B cell (primary cell): ENCODE measurements at regions of chr16 and their contacts with region 1.

Region 1: DNA sequence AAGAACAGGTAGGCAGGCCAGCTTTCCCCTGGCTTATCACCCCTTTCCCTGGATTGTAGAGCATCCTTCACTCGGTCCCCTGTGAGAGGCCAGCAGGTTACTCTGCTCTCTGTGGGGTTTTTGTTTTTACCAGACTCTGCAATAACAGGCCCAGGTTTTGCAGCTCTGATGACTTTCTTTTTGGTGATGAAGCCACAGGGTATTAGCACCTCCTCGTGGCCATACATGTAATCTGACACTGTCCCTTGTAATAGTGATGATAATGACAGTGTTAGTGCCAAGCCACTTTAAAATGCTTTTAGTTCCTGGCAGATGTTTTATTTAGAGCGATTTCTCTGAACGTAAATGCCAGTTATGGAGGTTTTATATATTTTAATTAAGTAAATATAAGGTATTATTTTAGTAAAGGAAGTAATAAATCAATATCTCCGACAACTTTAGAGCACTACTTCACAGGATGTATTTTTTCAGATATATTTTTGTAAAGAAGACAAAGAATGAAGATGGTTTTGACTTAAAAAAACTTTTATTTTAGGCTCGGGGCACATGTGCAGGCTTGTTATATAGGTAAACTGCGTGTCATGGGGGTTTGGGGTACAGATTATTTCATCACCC is 38.0 kb upstream of the CPHXL start:
- DNase-seq: peak; percentile 80
- ATAC-seq: peak; percentile 55
- H3K4me3 ChIP-seq: no peak overlapping the region
- H3K4me3 Mint-ChIP-seq: no peak overlapping the region
- H3K27ac ChIP-seq: no peak overlapping the region
- H3K27ac Mint-ChIP-seq: peak overlapping the region; percentile 75
- H3K4me1 ChIP-seq: peaks cover 14 to 23% of the 10 kb centered on the region in 2 donors
- H3K4me1 Mint-ChIP-seq: peaks cover 23% of the 10 kb centered on the region
- H3K27me3 ChIP-seq: no peaks in the 10 kb centered on the region
- H3K27me3 Mint-ChIP-seq: peaks cover 6% of the 10 kb centered on the region
- CTCF ChIP-seq: peak; percentile 86

Region 2: DNA sequence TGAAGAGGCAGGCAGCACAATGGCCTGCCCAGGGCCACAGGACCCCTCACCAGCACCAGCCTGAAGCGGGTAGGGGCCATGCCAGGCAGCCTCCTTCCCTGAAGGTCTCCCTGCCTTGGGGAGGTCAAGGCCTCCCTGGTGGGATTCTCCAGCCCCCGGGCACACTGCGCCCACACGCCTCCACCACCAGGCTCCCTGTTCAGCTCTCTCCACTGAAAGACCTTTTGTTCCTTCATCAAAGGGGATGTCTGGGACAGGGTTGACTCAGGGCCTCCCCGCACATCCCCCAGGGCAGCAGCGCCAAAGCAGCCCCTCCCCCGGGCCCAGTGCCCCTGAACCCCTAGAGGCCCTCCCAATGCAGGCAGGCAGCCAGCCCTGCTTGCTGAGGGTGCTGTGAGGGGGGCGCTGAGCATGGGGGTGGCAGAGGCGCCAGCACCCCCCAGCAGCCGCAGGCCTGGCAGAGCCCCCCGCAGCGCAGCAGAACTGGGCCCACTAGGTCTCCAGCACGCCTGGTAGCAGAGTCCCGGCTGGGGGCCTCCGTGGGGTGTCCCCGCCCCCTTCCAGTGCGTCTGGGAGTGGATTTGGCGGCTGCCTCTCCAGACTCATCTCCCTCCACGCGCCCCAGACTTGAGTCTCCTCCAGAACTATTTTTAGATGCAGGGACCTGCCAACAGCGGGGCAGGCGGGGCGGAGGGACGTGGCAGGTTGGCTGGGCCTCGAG is 526.0 kb before region 1 on chr16:
- CTCF ChIA-PET with region 1: interaction called, 19 read pairs
- POLR2A ChIA-PET with region 1: no interaction called
- intact Hi-C with region 1: no loop called
- DNase-seq: no peak
- ATAC-seq: no peak
- H3K4me3 ChIP-seq: no peak overlapping the region
- H3K4me3 Mint-ChIP-seq: no peak overlapping the region
- H3K27ac ChIP-seq: no peak overlapping the region
- H3K27ac Mint-ChIP-seq: no peak overlapping the region
- H3K4me1 ChIP-seq: peaks cover 0 to 7% of the 10 kb centered on the region in 2 donors
- H3K4me1 Mint-ChIP-seq: peaks cover 2% of the 10 kb centered on the region
- H3K27me3 ChIP-seq: peaks cover 0 to 89% (median 16%) of the 10 kb centered on the region in 4 experiments
- H3K27me3 Mint-ChIP-seq: peaks cover 59% of the 10 kb centered on the region
- CTCF ChIP-seq: no peak

Region 3: DNA sequence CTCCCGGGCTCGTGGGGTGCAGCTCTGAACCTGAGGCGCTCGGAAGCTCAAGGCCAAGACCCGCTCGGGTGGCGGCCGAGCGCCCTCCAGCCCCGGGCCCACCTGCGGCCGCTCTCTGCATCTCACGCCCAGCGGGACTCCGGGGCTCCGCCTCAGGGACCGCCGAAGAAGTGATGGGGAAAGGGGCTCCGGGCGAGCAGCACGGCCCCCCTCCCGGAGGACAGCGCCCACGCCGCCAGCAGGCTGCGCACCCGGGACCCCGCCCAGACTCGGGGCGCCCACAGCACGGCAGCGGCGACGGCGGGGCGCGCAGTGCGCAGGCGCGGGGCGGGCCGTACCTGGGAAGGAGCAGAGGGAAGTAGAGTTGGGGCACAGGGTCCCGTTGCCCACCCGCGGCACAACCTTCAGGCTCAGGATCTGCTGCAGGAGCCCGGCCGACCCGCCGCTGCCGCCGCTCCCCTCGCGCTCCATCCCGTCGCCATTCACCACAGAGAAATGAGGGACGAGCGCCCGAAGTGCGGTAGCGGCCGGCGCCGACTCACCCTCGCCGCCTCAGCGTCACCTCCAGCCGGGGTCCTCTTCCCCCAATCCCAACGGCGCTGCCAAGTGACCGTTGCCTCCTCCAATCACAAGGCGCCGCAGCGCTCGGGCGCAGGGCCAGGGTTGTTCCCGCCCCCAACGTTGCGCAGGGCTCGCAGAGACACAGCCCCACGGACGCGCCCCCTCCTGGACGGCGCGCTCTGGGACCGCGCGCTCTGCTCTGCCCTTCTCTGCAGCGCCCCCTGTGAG is 299.9 kb before region 1 on chr16 and contains the start of gene TMEM170A:
- CTCF ChIA-PET with region 1: interaction called, 75 read pairs
- POLR2A ChIA-PET with region 1: no interaction called
- intact Hi-C with region 1: loop called (anchors 1 kb)
- DNase-seq: peak; percentile 99
- ATAC-seq: peak; percentile 92
- H3K4me3 ChIP-seq: peak within 1 kb of the TSS; percentile 26 to 79 (median 72)
- H3K4me3 Mint-ChIP-seq: peak within 1 kb of the TSS; percentile 96
- H3K27ac ChIP-seq: peak within 1 kb of the TSS; percentile 92 to 93
- H3K27ac Mint-ChIP-seq: peak within 1 kb of the TSS; percentile 93
- H3K4me1 ChIP-seq: peaks cover 15 to 26% of the 10 kb centered on the region in 2 donors
- H3K4me1 Mint-ChIP-seq: peaks cover 37% of the 10 kb centered on the region
- H3K27me3 ChIP-seq: no peaks in the 10 kb centered on the region
- H3K27me3 Mint-ChIP-seq: no peaks in the 10 kb centered on the region
- CTCF ChIP-seq: peak; percentile 100
- total RNA-seq, gene TMEM170A: 37.9 and 45.6 TPM in 2 replicates

Region 4: DNA sequence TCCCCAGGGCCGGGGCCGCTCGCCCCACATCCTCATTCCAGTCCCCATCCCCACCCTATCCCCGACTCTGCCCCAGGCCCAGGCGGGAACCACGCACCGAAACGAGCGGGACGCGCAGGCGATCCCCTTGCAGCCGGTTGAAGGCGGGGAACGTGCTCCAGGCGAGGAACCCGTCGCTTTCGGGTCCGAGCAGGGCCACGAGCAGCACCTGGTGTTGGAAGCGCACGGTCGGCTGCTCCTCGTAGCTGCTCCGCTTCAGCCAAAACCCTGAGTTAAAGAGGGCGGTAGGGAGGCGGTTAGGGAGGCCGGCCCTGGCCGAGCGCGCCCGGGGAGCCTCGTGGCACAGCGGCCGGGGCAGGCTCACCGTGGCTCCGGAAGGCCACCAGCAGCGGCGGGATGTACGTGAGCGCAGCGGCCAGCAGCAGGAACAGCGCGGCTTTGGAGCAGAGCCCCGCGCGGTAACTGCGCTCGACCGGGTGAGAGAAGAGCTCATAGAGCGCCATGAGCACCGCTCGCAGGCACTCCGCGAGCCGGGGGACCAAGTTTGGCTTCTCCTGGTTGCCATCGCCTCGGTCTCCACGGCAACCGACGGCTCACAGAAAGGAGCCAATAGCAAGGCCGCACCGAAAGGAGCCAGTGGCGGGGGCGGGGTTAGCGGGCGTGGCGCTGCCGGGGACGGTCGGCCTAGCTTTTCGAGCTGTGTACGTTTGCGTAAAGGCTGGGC is 208.4 kb before region 1 on chr16 and contains the start of gene TMEM231:
- CTCF ChIA-PET with region 1: no interaction called
- POLR2A ChIA-PET with region 1: interaction called, 3 read pairs
- intact Hi-C with region 1: loop called (anchors 1 kb)
- DNase-seq: peak; percentile 96
- ATAC-seq: peak; percentile 93
- H3K4me3 ChIP-seq: peak within 1 kb of the TSS; percentile 34 to 78 (median 71)
- H3K4me3 Mint-ChIP-seq: peak within 1 kb of the TSS; percentile 97
- H3K27ac ChIP-seq: peak within 1 kb of the TSS; percentile 9 to 76
- H3K27ac Mint-ChIP-seq: peak within 1 kb of the TSS; percentile 88
- H3K4me1 ChIP-seq: peaks cover 9 to 16% of the 10 kb centered on the region in 2 donors
- H3K4me1 Mint-ChIP-seq: peaks cover 10% of the 10 kb centered on the region
- H3K27me3 ChIP-seq: peaks cover 0 to 8% (median 0%) of the 10 kb centered on the region in 4 experiments
- H3K27me3 Mint-ChIP-seq: no peaks in the 10 kb centered on the region
- CTCF ChIP-seq: peak; percentile 17
- total RNA-seq, gene TMEM231: 4.7 and 6.0 TPM in 2 replicates

Region 5: GRCh38 chr16:75622761-75623605 is 141.3 kb before region 1 on chr16 and contains the start of gene ADAT1:
- CTCF ChIA-PET with region 1: interaction called, 9 read pairs
- POLR2A ChIA-PET with region 1: interaction called, 3 read pairs
- intact Hi-C with region 1: loop called (anchors 1 kb)
- DNase-seq: peak; percentile 98
- ATAC-seq: peak; percentile 94
- H3K4me3 ChIP-seq: peak within 1 kb of the TSS; percentile 68 to 85 (median 80)
- H3K4me3 Mint-ChIP-seq: peak within 1 kb of the TSS; percentile 96
- H3K27ac ChIP-seq: peak within 1 kb of the TSS; percentile 87 to 91
- H3K27ac Mint-ChIP-seq: peak within 1 kb of the TSS; percentile 98
- H3K4me1 ChIP-seq: peaks cover 12 to 27% of the 10 kb centered on the region in 2 donors
- H3K4me1 Mint-ChIP-seq: peaks cover 27% of the 10 kb centered on the region
- H3K27me3 ChIP-seq: no peaks in the 10 kb centered on the region
- H3K27me3 Mint-ChIP-seq: no peaks in the 10 kb centered on the region
- CTCF ChIP-seq: no peak
- total RNA-seq, gene ADAT1: 71.2 and 75.2 TPM in 2 replicates